Thyroid gland (tissue), 4 donors: ENCODE measurements at regions of chr2 and their contacts with region 1.

Region 1: GRCh38 chr2:29834624-29835023 is 86.8 kb downstream of the ALK start:
- DNase-seq: no peak
- H3K4me3 ChIP-seq: no peak overlapping the region
- H3K27ac ChIP-seq: no peak overlapping the region
- H3K4me1 ChIP-seq: no peaks in the 10 kb centered on the region
- H3K27me3 ChIP-seq: no peaks in the 10 kb centered on the region
- CTCF ChIP-seq: no peak
- POLR2A ChIP-seq: no peak

Region 2: DNA sequence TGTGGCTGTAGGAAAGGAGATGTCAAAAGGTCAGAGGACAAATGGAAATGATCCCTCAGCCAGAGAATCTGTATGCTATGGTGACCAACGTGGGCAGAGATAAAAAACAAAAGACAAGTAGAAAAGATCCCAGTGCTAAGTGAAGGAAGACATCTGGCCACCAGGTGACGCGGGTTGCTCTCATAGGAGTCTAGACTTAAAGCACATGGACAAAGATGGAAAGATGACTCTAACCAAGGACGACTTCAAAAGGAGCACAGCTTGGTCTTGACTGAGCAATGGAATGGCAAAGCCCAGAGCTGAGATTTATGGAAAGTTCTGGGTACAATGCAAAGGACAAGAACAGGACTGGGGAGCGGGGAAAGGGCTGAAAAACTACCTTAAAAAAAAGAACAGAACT is 622.6 kb before region 1 on chr2:
- intact Hi-C with region 1: loop called (anchors 10 kb)
- DNase-seq: no peak
- H3K4me3 ChIP-seq: no peak overlapping the region
- H3K27ac ChIP-seq: no peak overlapping the region
- H3K4me1 ChIP-seq: no peaks in the 10 kb centered on the region
- H3K27me3 ChIP-seq: no peaks in the 10 kb centered on the region
- CTCF ChIP-seq: peak in 1 of 6 experiments; percentile 16
- POLR2A ChIP-seq: no peak

Region 3: DNA sequence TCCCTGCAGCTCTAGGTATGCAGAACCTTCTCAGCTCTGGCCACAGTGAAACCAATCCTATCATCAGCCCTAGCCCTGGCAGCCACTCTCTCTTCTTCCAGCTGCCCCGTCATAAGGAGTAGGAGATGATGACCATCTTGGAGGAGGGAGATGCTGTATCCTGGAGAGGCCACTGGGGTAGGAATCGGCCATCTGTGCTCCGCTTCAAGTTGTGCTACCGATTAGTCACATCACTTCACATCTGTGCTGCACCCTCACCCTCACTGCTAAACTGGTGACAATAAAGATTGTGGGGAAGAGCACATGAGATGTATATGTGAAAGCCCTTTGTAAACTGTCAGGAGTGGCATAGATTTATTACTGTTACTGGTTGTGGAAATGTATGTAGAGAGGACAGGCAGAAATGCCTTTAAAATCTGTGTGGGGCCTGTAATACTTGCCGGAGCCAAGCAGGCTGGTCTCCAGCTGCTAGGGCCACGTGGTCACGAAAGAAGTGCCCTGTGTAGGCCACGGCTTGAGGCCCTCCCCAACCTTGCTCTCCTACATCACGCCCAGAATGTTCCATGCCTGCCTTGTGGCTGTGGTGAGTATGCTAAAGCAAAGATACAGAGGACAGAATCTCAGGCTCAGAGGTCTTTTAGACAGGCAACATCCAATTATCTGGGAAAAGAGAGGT is 482.6 kb before region 1 on chr2:
- intact Hi-C with region 1: no loop called
- DNase-seq: no peak
- H3K4me3 ChIP-seq: no peak overlapping the region
- H3K27ac ChIP-seq: no peak overlapping the region
- H3K4me1 ChIP-seq: peaks cover 0 to 7% of the 10 kb centered on the region in 2 donors
- H3K27me3 ChIP-seq: no peaks in the 10 kb centered on the region
- CTCF ChIP-seq: no peak
- POLR2A ChIP-seq: no peak

Region 4: GRCh38 chr2:29966266-29966665 is 131.6 kb after region 1 on chr2:
- intact Hi-C with region 1: no loop called
- DNase-seq: no peak
- H3K4me3 ChIP-seq: no peak overlapping the region
- H3K27ac ChIP-seq: no peak overlapping the region
- H3K4me1 ChIP-seq: no peaks in the 10 kb centered on the region
- H3K27me3 ChIP-seq: no peaks in the 10 kb centered on the region
- CTCF ChIP-seq: no peak
- POLR2A ChIP-seq: no peak